ENCODE measurements at regions of chr5 and their contacts with region 1.

Region 1: DNA sequence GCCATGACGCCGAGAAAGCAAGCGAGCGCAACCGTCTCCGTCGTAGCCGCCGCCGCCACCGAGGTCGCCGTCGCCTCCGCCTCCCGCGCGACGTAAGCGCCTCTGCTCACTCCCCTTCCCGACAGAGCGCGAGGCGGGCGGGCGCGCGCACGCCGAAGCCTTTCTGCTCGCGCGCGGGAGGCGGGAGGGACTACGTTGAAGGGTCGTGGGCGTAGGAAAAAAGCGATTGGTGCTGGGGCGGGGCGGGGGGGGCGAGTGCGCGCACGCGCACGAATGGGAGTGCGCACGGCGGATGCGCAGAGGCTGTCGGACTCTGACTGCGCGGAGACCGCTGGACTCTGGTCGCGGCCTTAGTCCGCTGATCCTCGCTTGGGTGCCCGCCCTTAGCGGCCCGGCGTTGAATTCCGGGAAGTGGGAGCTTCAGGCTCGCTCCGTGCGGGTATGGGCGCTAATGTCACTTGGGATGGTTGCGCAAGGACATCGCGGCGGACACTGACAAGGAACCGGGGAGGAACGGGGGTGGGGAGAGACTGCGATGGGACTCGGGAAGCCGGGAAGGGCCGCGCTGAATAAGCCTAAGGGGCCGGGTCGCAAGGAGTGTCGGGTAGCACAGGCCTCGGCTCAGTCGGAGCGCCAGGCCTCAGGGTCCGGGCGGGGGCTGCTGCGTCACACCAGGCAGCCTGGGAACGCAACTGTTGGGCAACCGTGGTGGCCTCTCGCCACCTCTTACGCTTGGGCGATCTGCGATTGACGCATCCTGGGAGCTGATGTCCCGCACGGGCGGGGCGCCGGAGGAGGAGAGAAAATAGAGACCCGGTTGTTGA is at the start of gene CHD1:
- DNase-seq: peak; percentile 91 to 98 (median 96)
- ATAC-seq: peak; percentile 83
- H3K4me3 ChIP-seq: peak within 1 kb of the TSS; percentile 96
- H3K4me3 Mint-ChIP-seq: peak within 1 kb of the TSS; percentile 93 to 99 (median 98)
- H3K27ac ChIP-seq: peak within 1 kb of the TSS; percentile 98
- H3K27ac Mint-ChIP-seq: peak within 1 kb of the TSS; percentile 94 to 100 (median 99)
- H3K4me1 ChIP-seq: peaks cover 42 to 44% of the 10 kb centered on the region in 2 donors
- H3K4me1 Mint-ChIP-seq: peaks cover 33 to 83% (median 70%) of the 10 kb centered on the region in 7 donors
- H3K27me3 ChIP-seq: no peaks in the 10 kb centered on the region
- H3K27me3 Mint-ChIP-seq: peaks cover 0 to 2% (median 0%) of the 10 kb centered on the region in 5 donors
- total RNA-seq, gene CHD1: 51.8 to 134 (median 92.4) TPM

Region 2: GRCh38 chr5:98690002-98690401 is 239.1 kb before region 1 on chr5:
- CTCF ChIA-PET with region 1: no interaction called
- POLR2A ChIA-PET with region 1: no interaction called
- intact Hi-C with region 1: no loop called
- DNase-seq: no peak
- ATAC-seq: no peak
- H3K4me3 ChIP-seq: no peak overlapping the region
- H3K4me3 Mint-ChIP-seq: no peak overlapping the region
- H3K27ac ChIP-seq: no peak overlapping the region
- H3K27ac Mint-ChIP-seq: no peak overlapping the region
- H3K4me1 ChIP-seq: no peaks in the 10 kb centered on the region
- H3K4me1 Mint-ChIP-seq: no peaks in the 10 kb centered on the region
- H3K27me3 ChIP-seq: no peaks in the 10 kb centered on the region
- H3K27me3 Mint-ChIP-seq: no peaks in the 10 kb centered on the region

Region 3: DNA sequence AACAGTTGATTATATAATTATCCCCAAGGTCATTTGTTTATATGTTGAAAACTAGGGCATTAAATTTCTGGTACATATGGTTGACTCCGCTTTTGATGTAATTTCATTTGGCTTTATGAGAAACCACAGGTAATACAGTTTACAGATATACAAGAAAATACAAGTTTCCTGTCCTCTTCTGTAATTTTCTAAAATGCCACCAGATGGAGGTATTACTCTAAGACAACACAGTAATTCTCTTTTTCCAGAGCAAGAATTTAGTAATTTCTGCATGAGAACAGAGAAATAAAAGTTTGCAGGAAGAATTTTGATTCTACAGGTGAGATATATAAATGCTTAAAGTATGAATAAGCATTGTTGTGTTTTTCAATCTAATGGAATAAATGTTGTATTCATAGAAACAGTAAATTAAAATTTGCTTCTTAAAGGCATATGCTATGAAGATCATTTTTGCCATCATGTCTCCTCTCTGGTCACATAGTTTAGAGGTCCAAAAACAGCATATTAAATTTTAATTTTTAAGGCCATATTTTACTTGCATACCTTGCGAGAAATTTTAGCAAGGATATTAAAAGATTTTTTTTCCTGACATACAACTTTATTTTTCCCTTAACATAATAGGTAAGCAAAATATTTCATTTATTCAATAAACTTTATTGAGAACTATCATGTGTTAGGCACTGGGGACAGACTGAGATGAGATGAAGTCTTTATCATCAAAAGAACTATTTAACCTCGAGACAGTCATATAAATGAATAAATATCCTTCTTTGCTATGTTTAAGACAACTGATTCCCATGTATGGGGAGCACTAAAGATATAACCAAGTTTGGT is 23.0 kb before region 1 on chr5:
- CTCF ChIA-PET with region 1: no interaction called
- POLR2A ChIA-PET with region 1: interaction called, 19 read pairs
- intact Hi-C with region 1: loop called (anchors 1 kb)
- DNase-seq: peak in 7 of 9 donors; percentile 32 to 73 (median 64)
- ATAC-seq: peak; percentile 87
- H3K4me3 ChIP-seq: no peak overlapping the region
- H3K4me3 Mint-ChIP-seq: peak overlapping the region in 2 of 10 donors; percentile 2 to 3
- H3K27ac ChIP-seq: peak overlapping the region; percentile 31
- H3K27ac Mint-ChIP-seq: peak overlapping the region in 8 of 9 donors; percentile 1 to 77 (median 34)
- H3K4me1 ChIP-seq: peaks cover 10 to 12% of the 10 kb centered on the region in 2 donors
- H3K4me1 Mint-ChIP-seq: peaks cover 29 to 68% (median 53%) of the 10 kb centered on the region in 7 donors
- H3K27me3 ChIP-seq: no peaks in the 10 kb centered on the region
- H3K27me3 Mint-ChIP-seq: no peaks in the 10 kb centered on the region

Region 4: DNA sequence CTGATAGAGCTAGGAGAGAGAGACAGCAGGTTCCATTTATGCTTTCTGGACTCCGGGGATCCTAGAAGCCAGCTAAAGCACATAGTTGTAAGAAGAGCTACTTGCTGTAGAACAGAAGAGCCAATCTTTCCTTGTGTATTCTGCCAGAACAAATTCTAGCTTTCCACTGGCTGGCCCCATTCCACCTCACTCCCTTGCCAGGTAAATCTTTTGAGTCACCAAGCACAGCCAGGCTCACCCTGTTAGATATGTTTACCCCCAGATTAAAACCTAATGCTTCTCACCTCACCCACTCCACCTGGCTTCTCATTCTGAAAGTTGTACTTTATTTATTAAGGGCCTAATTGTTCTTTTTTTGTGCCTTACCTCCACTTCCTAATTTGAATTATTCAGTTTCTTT is 48.6 kb after region 1 on chr5:
- CTCF ChIA-PET with region 1: no interaction called
- POLR2A ChIA-PET with region 1: interaction called, 6 read pairs
- intact Hi-C with region 1: loop called in 1 of 2 experiments (anchors 1 kb)
- DNase-seq: no peak
- ATAC-seq: no peak
- H3K4me3 ChIP-seq: no peak overlapping the region
- H3K4me3 Mint-ChIP-seq: no peak overlapping the region
- H3K27ac ChIP-seq: no peak overlapping the region
- H3K27ac Mint-ChIP-seq: no peak overlapping the region
- H3K4me1 ChIP-seq: no peaks in the 10 kb centered on the region
- H3K4me1 Mint-ChIP-seq: peaks cover 9 to 20% (median 18%) of the 10 kb centered on the region in 7 donors
- H3K27me3 ChIP-seq: no peaks in the 10 kb centered on the region
- H3K27me3 Mint-ChIP-seq: peaks cover 0 to 5% (median 0%) of the 10 kb centered on the region in 5 donors

Region 5: GRCh38 chr5:99037668-99038067 is 108.6 kb after region 1 on chr5:
- CTCF ChIA-PET with region 1: interaction called, 11 read pairs
- POLR2A ChIA-PET with region 1: interaction called, 89 read pairs
- intact Hi-C with region 1: loop called (anchors 1 kb)
- DNase-seq: peak in 8 of 9 donors; percentile 17 to 84 (median 72)
- ATAC-seq: peak; percentile 77
- H3K4me3 ChIP-seq: peak overlapping the region; percentile 47
- H3K4me3 Mint-ChIP-seq: peak overlapping the region; percentile 7 to 75 (median 64)
- H3K27ac ChIP-seq: peak overlapping the region; percentile 32
- H3K27ac Mint-ChIP-seq: peak overlapping the region; percentile 44 to 96 (median 87)
- H3K4me1 ChIP-seq: peaks cover 30 to 33% of the 10 kb centered on the region in 2 donors
- H3K4me1 Mint-ChIP-seq: peaks cover 34 to 74% (median 53%) of the 10 kb centered on the region in 7 donors
- H3K27me3 ChIP-seq: no peaks in the 10 kb centered on the region
- H3K27me3 Mint-ChIP-seq: peaks cover 0 to 25% (median 0%) of the 10 kb centered on the region in 5 donors

Region 6: DNA sequence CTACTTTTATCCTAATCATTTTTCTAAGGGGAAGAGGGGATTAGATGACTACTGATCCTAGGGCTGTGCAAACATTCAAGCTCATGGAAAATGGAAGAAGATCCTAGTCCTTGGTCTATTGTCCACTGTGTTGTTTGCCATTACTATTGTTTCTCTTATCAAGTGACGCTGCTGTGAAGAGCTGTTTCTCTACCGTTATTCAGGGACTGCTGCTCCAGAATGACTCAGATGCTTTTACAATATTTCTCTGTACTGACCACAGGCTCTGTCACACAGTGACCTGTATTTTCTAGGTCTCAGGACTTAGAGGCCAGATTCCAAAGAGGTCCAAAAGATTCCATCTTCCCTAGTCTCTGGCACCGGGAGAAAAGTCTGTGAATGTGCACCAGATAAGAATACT is 159.2 kb after region 1 on chr5:
- CTCF ChIA-PET with region 1: no interaction called
- POLR2A ChIA-PET with region 1: interaction called, 12 read pairs
- intact Hi-C with region 1: no loop called
- DNase-seq: no peak
- ATAC-seq: no peak
- H3K4me3 ChIP-seq: no peak overlapping the region
- H3K4me3 Mint-ChIP-seq: no peak overlapping the region
- H3K27ac ChIP-seq: no peak overlapping the region
- H3K27ac Mint-ChIP-seq: peak overlapping the region in 2 of 9 donors; percentile 14 to 24
- H3K4me1 ChIP-seq: no peaks in the 10 kb centered on the region
- H3K4me1 Mint-ChIP-seq: peaks cover 0 to 30% (median 21%) of the 10 kb centered on the region in 7 donors
- H3K27me3 ChIP-seq: peaks cover 0 to 3% of the 10 kb centered on the region in 2 donors
- H3K27me3 Mint-ChIP-seq: peaks cover 0 to 6% (median 0%) of the 10 kb centered on the region in 5 donors

Measured in naive thymus-derived CD4-positive, alpha-beta T cell (primary cell).